Mammary epithelial cell (primary cell): ENCODE measurements at regions of chr2 and their contacts with region 1.

Region 1: GRCh38 chr2:160429248-160430000 is 64.2 kb downstream of the RBMS1 start:
- DNase-seq: peak; percentile 42
- H3K4me3 ChIP-seq: no peak overlapping the region
- H3K27ac ChIP-seq: peak overlapping the region; percentile 11
- H3K4me1 ChIP-seq: peaks cover 47% of the 10 kb centered on the region
- H3K27me3 ChIP-seq: no peaks in the 10 kb centered on the region
- CTCF ChIP-seq: peak; percentile 46 to 57

Region 2: GRCh38 chr2:160076914-160077313 is 352.5 kb before region 1 on chr2:
- CTCF ChIA-PET with region 1: no interaction called
- dilution Hi-C with region 1: no loop called
- in situ Hi-C with region 1: no loop called
- intact Hi-C with region 1: no loop called
- DNase-seq: no peak
- H3K4me3 ChIP-seq: no peak overlapping the region
- H3K27ac ChIP-seq: no peak overlapping the region
- H3K4me1 ChIP-seq: peaks cover 12% of the 10 kb centered on the region
- H3K27me3 ChIP-seq: no peaks in the 10 kb centered on the region
- CTCF ChIP-seq: no peak

Region 3: GRCh38 chr2:160353166-160353565 is 76.3 kb before region 1 on chr2:
- CTCF ChIA-PET with region 1: interaction called, 3 read pairs
- dilution Hi-C with region 1: no loop called
- in situ Hi-C with region 1: no loop called
- intact Hi-C with region 1: loop called (anchors 2 kb)
- DNase-seq: no peak
- H3K4me3 ChIP-seq: no peak overlapping the region
- H3K27ac ChIP-seq: peak overlapping the region; percentile 53
- H3K4me1 ChIP-seq: peaks cover 28% of the 10 kb centered on the region
- H3K27me3 ChIP-seq: no peaks in the 10 kb centered on the region
- CTCF ChIP-seq: peak in 1 of 2 donors; percentile 51

Region 4: GRCh38 chr2:161273038-161273760 is 843.8 kb after region 1 on chr2:
- CTCF ChIA-PET with region 1: no interaction called
- dilution Hi-C with region 1: no loop called
- in situ Hi-C with region 1: no loop called
- intact Hi-C with region 1: no loop called
- DNase-seq: peak; percentile 40
- H3K4me3 ChIP-seq: no peak overlapping the region
- H3K27ac ChIP-seq: no peak overlapping the region
- H3K4me1 ChIP-seq: no peaks in the 10 kb centered on the region
- H3K27me3 ChIP-seq: no peaks in the 10 kb centered on the region
- CTCF ChIP-seq: peak; percentile 59 to 65